A673 (cell line): ENCODE measurements at regions of chr11 and their contacts with region 1.

Region 1: GRCh38 chr11:33147559-33147958 is 13.7 kb downstream of the CSTF3 start:
- DNase-seq: no peak
- H3K4me3 ChIP-seq: no peak overlapping the region
- H3K27ac ChIP-seq: no peak overlapping the region
- H3K4me1 ChIP-seq: no peaks in the 10 kb centered on the region
- H3K27me3 ChIP-seq: no peaks in the 10 kb centered on the region
- CTCF ChIP-seq: no peak

Region 2: DNA sequence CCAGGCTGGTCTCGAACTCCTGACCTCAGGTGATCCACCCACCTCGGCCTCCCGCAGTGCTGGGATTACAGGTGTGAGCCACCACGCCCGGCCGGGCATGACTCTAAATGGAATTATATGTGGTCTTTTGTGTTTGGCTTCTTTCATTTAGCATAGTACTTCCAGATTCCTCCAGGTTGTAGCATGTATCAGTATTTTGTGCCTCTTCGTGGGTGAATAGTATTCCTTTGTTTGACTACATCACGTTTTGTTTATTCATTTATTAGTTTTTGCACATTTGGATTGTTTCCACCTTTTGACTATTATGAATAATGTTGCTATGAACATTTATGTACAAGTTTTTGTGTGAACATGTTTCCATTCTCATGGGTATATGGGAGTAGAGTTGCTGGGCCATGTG is 230.6 kb before region 1 on chr11:
- CTCF ChIA-PET with region 1: no interaction called
- POLR2A ChIA-PET with region 1: interaction called, 10 read pairs
- intact Hi-C with region 1: no loop called
- DNase-seq: no peak
- H3K4me3 ChIP-seq: no peak overlapping the region
- H3K27ac ChIP-seq: no peak overlapping the region
- H3K4me1 ChIP-seq: no peaks in the 10 kb centered on the region
- H3K27me3 ChIP-seq: no peaks in the 10 kb centered on the region
- CTCF ChIP-seq: no peak